Activated CD4-positive, alpha-beta T cell treated with anti-CD3 and anti-CD28 coated beads for 36 hours (primary cell): ENCODE measurements at regions of chr1 and their contacts with region 1.

Region 1: DNA sequence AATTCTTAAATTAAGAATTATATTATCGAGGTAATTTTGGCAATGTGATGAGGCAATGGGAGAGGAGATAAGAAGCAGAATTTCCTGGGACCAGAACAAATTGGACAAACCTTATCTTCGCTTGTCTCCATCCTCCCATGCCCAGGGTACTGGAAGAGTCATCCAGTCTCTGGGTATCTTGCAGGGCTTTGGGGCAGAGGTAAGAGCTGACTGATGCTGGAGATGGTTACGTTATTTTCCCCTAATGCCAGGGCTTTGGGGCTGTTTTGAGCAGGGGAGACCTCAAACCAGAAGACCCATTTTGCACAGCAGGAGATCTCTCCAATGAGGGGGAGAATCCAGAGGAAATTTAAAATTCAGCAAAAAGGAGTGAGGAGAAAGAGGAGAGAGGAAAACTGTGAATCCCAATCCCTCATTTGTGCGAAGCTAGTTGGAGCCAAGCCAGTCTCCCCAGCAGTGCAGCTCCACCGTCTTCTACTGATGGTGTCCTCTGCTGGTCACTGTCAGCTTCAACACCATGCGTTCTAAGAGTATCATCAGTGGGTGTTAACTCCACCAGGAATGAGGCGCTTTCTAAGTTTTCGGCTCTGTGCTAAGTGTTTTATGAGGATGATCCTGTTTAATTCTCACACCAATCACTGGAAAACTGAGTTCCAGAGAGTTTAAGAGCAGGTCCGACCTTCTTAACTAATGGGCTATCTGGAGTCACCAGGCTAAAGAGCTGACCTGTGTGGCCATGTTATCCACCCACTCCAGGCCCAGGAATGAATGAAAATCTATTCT is 86.8 kb upstream of the CD34 start:
- DNase-seq: peak; percentile 75
- ATAC-seq: peak; percentile 87
- H3K4me3 Mint-ChIP-seq: no peak overlapping the region
- H3K27ac Mint-ChIP-seq: no peak overlapping the region
- H3K4me1 Mint-ChIP-seq: no peaks in the 10 kb centered on the region
- H3K27me3 Mint-ChIP-seq: peaks cover 9% of the 10 kb centered on the region

Region 2: DNA sequence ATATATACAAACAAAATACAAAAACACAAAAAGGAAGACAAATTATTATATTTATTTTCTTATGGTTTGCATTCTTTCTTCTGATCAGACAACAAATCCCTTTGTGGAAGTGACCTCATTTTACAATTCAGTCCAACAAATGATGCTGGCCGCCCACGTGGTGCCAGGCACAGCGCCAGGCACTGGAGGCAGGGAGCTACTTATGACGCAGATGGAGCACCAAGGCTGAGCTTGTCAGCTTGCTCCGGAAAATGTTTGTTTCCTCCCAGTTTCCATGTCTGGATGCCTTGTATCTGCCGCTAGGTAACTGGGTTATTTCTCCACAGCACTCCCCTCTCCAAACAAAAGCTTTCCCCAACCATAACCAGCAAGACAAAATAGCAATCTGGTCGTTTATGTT is 56.0 kb before region 1 on chr1:
- CTCF ChIA-PET with region 1: no interaction called
- POLR2A ChIA-PET with region 1: no interaction called
- intact Hi-C with region 1: no loop called
- DNase-seq: no peak
- ATAC-seq: no peak
- H3K4me3 Mint-ChIP-seq: no peak overlapping the region
- H3K27ac Mint-ChIP-seq: no peak overlapping the region
- H3K4me1 Mint-ChIP-seq: no peaks in the 10 kb centered on the region
- H3K27me3 Mint-ChIP-seq: peaks cover 14% of the 10 kb centered on the region

Region 3: DNA sequence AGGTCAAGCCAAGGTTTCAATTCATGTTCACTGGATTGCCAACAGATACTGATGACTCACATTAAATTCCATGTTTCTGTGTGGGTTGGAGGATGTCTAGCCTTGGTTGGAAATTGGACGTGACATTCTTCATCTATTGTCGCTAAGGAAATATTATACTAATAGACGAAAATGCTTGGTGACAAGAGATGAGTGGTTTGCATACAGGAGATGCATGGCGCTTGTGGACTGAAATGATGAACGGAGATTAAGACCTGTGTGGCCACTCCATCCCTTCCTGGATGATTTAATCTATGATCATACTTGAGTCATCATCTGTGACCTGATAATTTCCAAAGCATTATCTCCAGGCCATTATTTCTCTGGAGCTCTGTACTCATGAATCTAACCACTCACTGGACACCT is 10.3 kb after region 1 on chr1:
- CTCF ChIA-PET with region 1: interaction called, 18 read pairs
- POLR2A ChIA-PET with region 1: no interaction called
- intact Hi-C with region 1: no loop called
- DNase-seq: no peak
- ATAC-seq: no peak
- H3K4me3 Mint-ChIP-seq: no peak overlapping the region
- H3K27ac Mint-ChIP-seq: no peak overlapping the region
- H3K4me1 Mint-ChIP-seq: no peaks in the 10 kb centered on the region
- H3K27me3 Mint-ChIP-seq: no peaks in the 10 kb centered on the region